WTC11 (cell line): ENCODE measurements at regions of chr19 and their contacts with region 1.

Region 1: GRCh38 chr19:44723952-44724319 is 24.6 kb upstream of the BCL3 start:
- DNase-seq: peak; percentile 89
- ATAC-seq: peak; percentile 86
- H3K4me3 Mint-ChIP-seq: no peak overlapping the region
- H3K27ac Mint-ChIP-seq: no peak overlapping the region
- H3K4me1 Mint-ChIP-seq: peaks cover 26% of the 10 kb centered on the region
- H3K27me3 Mint-ChIP-seq: peaks cover 4% of the 10 kb centered on the region
- CTCF ChIP-seq: peak; percentile 94

Region 2: GRCh38 chr19:44552324-44552723 is 171.6 kb before region 1 on chr19:
- CTCF ChIA-PET with region 1: no interaction called
- POLR2A ChIA-PET with region 1: no interaction called
- DNase-seq: peak; percentile 95
- ATAC-seq: peak; percentile 99
- H3K4me3 Mint-ChIP-seq: no peak overlapping the region
- H3K27ac Mint-ChIP-seq: no peak overlapping the region
- H3K4me1 Mint-ChIP-seq: no peaks in the 10 kb centered on the region
- H3K27me3 Mint-ChIP-seq: peaks cover 16% of the 10 kb centered on the region
- CTCF ChIP-seq: peak; percentile 79

Region 3: GRCh38 chr19:44689056-44689895 is 34.7 kb before region 1 on chr19:
- CTCF ChIA-PET with region 1: interaction called, 85 read pairs
- POLR2A ChIA-PET with region 1: no interaction called
- DNase-seq: peak; percentile 94
- ATAC-seq: peak; percentile 84
- H3K4me3 Mint-ChIP-seq: peak overlapping the region; percentile 11; the same call in 1 of the 2 replicates
- H3K27ac Mint-ChIP-seq: no peak overlapping the region
- H3K4me1 Mint-ChIP-seq: peaks cover 22% of the 10 kb centered on the region
- H3K27me3 Mint-ChIP-seq: no peaks in the 10 kb centered on the region
- CTCF ChIP-seq: peak; percentile 97

Region 4: DNA sequence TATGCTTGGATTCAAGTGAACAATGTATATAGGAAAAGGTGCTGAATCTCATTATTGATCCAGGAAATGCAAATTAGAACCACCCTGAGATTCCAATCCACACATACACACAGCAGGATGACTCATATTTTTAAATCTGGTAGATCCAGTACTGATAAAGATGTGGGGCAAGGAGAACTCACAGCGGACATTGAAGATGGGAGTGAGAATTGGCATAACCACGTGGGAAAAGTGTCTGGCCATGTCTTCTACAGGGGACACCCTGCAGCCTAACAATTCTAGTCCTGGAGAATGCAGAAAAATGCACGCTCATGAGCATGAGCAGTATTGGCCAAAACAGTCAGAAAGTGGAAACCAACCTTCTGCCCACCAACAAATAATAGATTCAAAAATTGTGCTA is 11.1 kb after region 1 on chr19:
- CTCF ChIA-PET with region 1: interaction called, 23 read pairs
- POLR2A ChIA-PET with region 1: no interaction called
- DNase-seq: no peak
- ATAC-seq: no peak
- H3K4me3 Mint-ChIP-seq: no peak overlapping the region
- H3K27ac Mint-ChIP-seq: no peak overlapping the region
- H3K4me1 Mint-ChIP-seq: peaks cover 7% of the 10 kb centered on the region; the same call in 1 of the 2 replicates
- H3K27me3 Mint-ChIP-seq: peaks cover 21% of the 10 kb centered on the region
- CTCF ChIP-seq: no peak

Region 5: GRCh38 chr19:44752816-44753618 is 29.1 kb after region 1 on chr19:
- CTCF ChIA-PET with region 1: interaction called, 115 read pairs
- POLR2A ChIA-PET with region 1: no interaction called
- DNase-seq: peak; percentile 72
- ATAC-seq: peak; percentile 27
- H3K4me3 Mint-ChIP-seq: peak overlapping the region; percentile 71
- H3K27ac Mint-ChIP-seq: no peak overlapping the region
- H3K4me1 Mint-ChIP-seq: peaks cover 30% of the 10 kb centered on the region
- H3K27me3 Mint-ChIP-seq: peaks cover 87% of the 10 kb centered on the region
- CTCF ChIP-seq: no peak

Region 6: DNA sequence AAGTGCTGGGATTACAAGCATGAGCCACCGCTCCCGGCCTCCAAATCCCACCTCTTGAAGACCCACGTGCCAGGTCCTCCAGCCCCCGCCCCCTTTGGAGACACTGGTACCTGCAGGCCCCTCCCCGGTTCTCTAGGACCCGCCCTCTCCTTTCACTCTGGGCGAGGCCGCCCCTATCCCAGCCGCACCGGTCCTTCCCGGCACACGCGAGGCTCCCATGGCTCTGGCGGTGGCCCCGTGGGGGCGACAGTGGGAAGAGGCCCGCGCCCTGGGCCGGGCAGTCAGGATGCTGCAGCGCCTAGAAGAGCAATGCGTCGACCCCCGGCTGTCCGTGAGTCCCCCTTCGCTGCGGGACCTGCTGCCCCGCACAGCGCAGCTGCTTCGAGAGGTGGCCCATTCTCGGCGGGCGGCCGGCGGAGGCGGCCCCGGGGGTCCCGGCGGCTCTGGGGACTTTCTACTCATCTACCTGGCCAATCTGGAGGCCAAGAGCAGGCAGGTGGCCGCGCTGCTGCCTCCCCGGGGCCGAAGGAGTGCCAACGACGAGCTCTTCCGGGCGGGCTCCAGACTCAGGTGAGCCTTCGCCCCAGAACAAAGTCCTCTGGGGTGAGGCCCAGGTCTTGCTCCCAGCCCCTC is 53.9 kb after region 1 on chr19 and contains the start of gene CBLC:
- CTCF ChIA-PET with region 1: interaction called, 548 read pairs
- POLR2A ChIA-PET with region 1: interaction called, 3 read pairs
- DNase-seq: peak; percentile 96
- ATAC-seq: peak; percentile 99
- H3K4me3 Mint-ChIP-seq: peak within 1 kb of the TSS; percentile 61
- H3K27ac Mint-ChIP-seq: 0 out of 2 replicates have a peak within 1 kb of the TSS, but pooled peaks have one; percentile 6
- H3K4me1 Mint-ChIP-seq: peaks cover 4% of the 10 kb centered on the region
- H3K27me3 Mint-ChIP-seq: peaks cover 17% of the 10 kb centered on the region
- CTCF ChIP-seq: no peak
- total RNA-seq, gene CBLC: 20.5 to 29.5 TPM (median 27.8 TPM) in 3 replicates

Region 7: DNA sequence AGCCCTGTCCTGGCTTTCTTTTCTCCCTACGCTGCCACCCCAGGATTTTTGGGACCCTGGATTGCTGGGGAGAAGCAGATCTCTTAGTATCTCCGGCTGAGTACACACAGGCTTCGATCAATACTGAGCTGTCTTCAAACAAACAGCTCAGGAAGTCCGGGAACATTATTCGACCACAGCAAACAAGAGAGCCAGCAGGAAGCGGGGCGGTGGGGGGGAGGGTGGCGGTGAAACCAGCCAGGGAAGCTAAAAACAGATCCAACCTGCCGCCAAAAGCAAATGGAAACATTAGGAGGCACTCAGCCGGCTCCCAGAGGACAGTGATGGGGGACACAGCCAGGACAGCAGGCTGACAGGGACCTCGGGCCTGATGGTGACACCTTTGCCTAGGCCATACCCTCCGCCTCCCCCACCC is 72.8 kb after region 1 on chr19:
- CTCF ChIA-PET with region 1: interaction called, 12 read pairs
- POLR2A ChIA-PET with region 1: no interaction called
- DNase-seq: no peak
- ATAC-seq: peak; percentile 52
- H3K4me3 Mint-ChIP-seq: peak overlapping the region; percentile 6; the same call in 1 of the 2 replicates
- H3K27ac Mint-ChIP-seq: peak overlapping the region; percentile 96
- H3K4me1 Mint-ChIP-seq: peaks cover 31% of the 10 kb centered on the region
- H3K27me3 Mint-ChIP-seq: peaks cover 14% of the 10 kb centered on the region
- CTCF ChIP-seq: no peak

Region 8: GRCh38 chr19:44845612-44846454 is 121.9 kb after region 1 on chr19 and contains the start of gene NECTIN2:
- CTCF ChIA-PET with region 1: interaction called, 21 read pairs
- POLR2A ChIA-PET with region 1: interaction called, 3 read pairs
- DNase-seq: peak; percentile 100
- ATAC-seq: peak; percentile 59
- H3K4me3 Mint-ChIP-seq: peak within 1 kb of the TSS; percentile 97
- H3K27ac Mint-ChIP-seq: peak within 1 kb of the TSS; percentile 99
- H3K4me1 Mint-ChIP-seq: peaks cover 23% of the 10 kb centered on the region
- H3K27me3 Mint-ChIP-seq: peaks cover 14% of the 10 kb centered on the region
- CTCF ChIP-seq: peak; percentile 57
- total RNA-seq, gene NECTIN2: 164 to 170 TPM (median 168 TPM) in 3 replicates